Endothelial cell of umbilical vein (primary cell): ENCODE measurements at regions of chr2 and their contacts with region 1.

Region 1: GRCh38 chr2:219597552-219598307 is at the start of gene STK11IP:
- DNase-seq: peak; percentile 95
- H3K4me3 ChIP-seq: peak within 1 kb of the TSS; percentile 47 to 76 (median 67)
- H3K27ac ChIP-seq: peak within 1 kb of the TSS; percentile 86
- H3K4me1 ChIP-seq: peaks cover 12% of the 10 kb centered on the region
- H3K27me3 ChIP-seq: no peaks in the 10 kb centered on the region
- CTCF ChIP-seq: no peak
- POLR2A ChIP-seq: peak; percentile 97
- total RNA-seq, gene STK11IP: 19.2 and 20.2 TPM in 2 replicates

Region 2: GRCh38 chr2:219177552-219178376 is 420.0 kb before region 1 on chr2 and contains the start of gene RETREG2:
- CTCF ChIA-PET with region 1: no interaction called
- POLR2A ChIA-PET with region 1: no interaction called
- dilution Hi-C with region 1: no loop called
- intact Hi-C with region 1: no loop called
- DNase-seq: peak; percentile 93
- H3K4me3 ChIP-seq: peak within 1 kb of the TSS; percentile 44 to 81 (median 67)
- H3K27ac ChIP-seq: peak within 1 kb of the TSS; percentile 62
- H3K4me1 ChIP-seq: peaks cover 18% of the 10 kb centered on the region
- H3K27me3 ChIP-seq: no peaks in the 10 kb centered on the region
- CTCF ChIP-seq: peak in 1 of 2 donors; percentile 25
- POLR2A ChIP-seq: peak; percentile 97
- total RNA-seq, gene RETREG2: 58.2 and 59.5 TPM in 2 replicates

Region 3: DNA sequence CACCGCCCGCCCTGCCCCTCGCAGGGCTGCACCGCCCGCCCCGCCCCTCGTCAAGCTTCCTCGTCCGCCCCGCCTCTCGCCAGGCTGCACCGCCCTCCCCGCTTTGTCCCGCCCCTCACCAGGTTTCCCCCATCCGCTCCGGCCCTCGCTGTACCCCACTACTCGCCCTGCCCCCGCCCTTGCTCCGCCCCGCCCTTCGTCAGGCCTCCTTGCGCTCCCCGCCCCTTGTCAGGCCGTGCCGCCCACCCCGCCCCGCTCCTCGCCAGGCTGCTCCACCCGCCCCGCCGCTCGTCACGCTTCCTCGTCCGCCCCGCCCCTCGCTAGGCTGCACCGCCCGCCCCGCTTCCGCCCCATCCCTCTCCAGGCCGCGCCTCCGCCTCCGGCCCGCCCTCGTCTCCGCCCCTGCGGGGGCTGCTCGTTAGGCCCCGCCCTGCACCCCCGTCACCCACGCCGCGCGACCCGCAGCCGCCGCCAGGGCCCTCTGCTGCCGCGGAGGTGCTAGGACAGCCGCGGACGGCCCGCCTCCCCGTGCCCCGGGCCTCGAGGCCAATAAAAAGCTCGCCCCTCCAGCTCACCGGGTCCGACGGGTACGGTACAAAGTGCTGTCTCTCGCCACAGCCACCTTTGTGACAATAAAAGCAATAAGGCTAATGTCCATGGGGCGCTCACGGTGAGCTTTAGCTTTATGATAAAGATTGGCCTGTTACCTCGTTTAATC is 209.4 kb before region 1 on chr2:
- CTCF ChIA-PET with region 1: no interaction called
- POLR2A ChIA-PET with region 1: no interaction called
- dilution Hi-C with region 1: no loop called
- intact Hi-C with region 1: loop called (anchors 1 kb)
- DNase-seq: peak; percentile 96
- H3K4me3 ChIP-seq: peak overlapping the region in 2 of 3 experiments; percentile 46 to 55
- H3K27ac ChIP-seq: no peak overlapping the region
- H3K4me1 ChIP-seq: peaks cover 9% of the 10 kb centered on the region
- H3K27me3 ChIP-seq: peaks cover 2% of the 10 kb centered on the region in 2 experiments
- CTCF ChIP-seq: peak; percentile 47 to 56
- POLR2A ChIP-seq: no peak

Region 4: DNA sequence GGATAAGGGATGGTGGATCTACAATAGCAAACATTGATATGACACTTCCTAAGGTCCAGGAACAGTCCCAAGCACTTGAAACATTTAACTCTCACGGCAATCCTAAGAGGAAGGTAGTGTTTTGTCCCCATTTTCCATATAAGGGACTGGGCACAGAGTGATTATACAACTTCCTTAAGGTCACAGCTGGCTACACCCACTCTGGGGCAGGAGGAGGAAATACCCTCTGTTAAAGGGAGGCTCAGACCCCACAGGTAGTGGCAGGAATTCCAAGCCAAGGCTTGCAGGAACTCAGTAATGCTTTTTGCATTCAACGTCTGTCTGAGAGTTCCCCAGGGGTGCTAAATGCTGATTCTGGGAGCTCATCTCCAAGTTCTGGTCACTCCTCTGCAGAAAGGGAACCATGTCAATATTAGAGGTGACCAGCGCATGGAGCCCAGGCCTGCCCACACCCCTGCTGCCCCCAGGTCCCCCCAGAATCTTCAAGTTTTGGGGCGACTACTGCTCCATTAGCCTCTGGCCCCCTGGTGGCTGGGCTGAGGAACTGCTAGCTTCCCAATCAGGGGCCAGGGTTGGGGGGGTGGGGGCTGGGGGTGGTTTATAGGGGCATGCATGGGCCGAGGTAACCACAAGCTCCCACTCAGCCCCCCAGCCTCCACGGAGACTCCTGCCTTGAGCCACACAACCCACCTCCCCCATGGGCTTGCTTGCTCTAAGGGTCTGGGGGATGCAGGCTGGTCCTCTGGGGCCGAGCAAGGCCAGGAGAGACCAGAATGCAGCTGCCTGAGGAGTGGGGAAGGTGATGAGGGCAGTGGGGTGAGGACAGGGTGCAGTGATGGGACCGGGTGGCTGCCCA is 37.5 kb before region 1 on chr2:
- CTCF ChIA-PET with region 1: interaction called, 23 read pairs
- POLR2A ChIA-PET with region 1: interaction called, 5 read pairs
- dilution Hi-C with region 1: no loop called
- intact Hi-C with region 1: no loop called
- DNase-seq: no peak
- H3K4me3 ChIP-seq: no peak overlapping the region
- H3K27ac ChIP-seq: no peak overlapping the region
- H3K4me1 ChIP-seq: no peaks in the 10 kb centered on the region
- H3K27me3 ChIP-seq: peaks cover 0 to 3% of the 10 kb centered on the region in 2 experiments
- CTCF ChIP-seq: peak; percentile 37 to 70
- POLR2A ChIP-seq: no peak

Region 5: GRCh38 chr2:219571311-219572236 is 26.2 kb before region 1 on chr2 and contains the start of gene OBSL1:
- CTCF ChIA-PET with region 1: interaction called, 4 read pairs
- POLR2A ChIA-PET with region 1: no interaction called
- dilution Hi-C with region 1: no loop called
- intact Hi-C with region 1: loop called (anchors 1 kb)
- DNase-seq: peak; percentile 61
- H3K4me3 ChIP-seq: peak within 1 kb of the TSS in 2 of 3 experiments; percentile 36 to 75
- H3K27ac ChIP-seq: no peak within 1 kb of the TSS
- H3K4me1 ChIP-seq: no peaks in the 10 kb centered on the region
- H3K27me3 ChIP-seq: peaks cover 14 to 25% of the 10 kb centered on the region in 2 experiments
- CTCF ChIP-seq: no peak
- POLR2A ChIP-seq: no peak
- total RNA-seq, gene OBSL1: 8.0 and 16.7 TPM in 2 replicates